Ovary (tissue), 10 donors: ENCODE measurements at regions of chr19 and their contacts with region 1.

Region 1: GRCh38 chr19:16628183-16628983 is at the start of gene MED26:
- DNase-seq: peak; percentile 98 to 99 (median 99)
- H3K4me3 ChIP-seq: peak within 1 kb of the TSS; percentile 98
- H3K27ac ChIP-seq: peak within 1 kb of the TSS; percentile 84 to 94
- H3K4me1 ChIP-seq: peaks cover 8% of the 10 kb centered on the region
- H3K27me3 ChIP-seq: no peaks in the 10 kb centered on the region
- CTCF ChIP-seq: peak in 1 of 3 donors; percentile 24
- EP300 ChIP-seq: peak; percentile 51
- POLR2A ChIP-seq: peak; percentile 63
- total RNA-seq, gene MED26: 10.3 to 13.2 (median 11.6) TPM

Region 2: GRCh38 chr19:16572332-16573211 is 55.8 kb before region 1 on chr19 and contains the start of gene SLC35E1:
- intact Hi-C with region 1: loop called in 2 of 4 experiments (anchors 5 kb)
- DNase-seq: peak; percentile 93 to 96 (median 94)
- H3K4me3 ChIP-seq: peak within 1 kb of the TSS; percentile 79
- H3K27ac ChIP-seq: peak within 1 kb of the TSS; percentile 39 to 52
- H3K4me1 ChIP-seq: peaks cover 15% of the 10 kb centered on the region
- H3K27me3 ChIP-seq: no peaks in the 10 kb centered on the region
- CTCF ChIP-seq: no peak
- EP300 ChIP-seq: no peak
- POLR2A ChIP-seq: peak; percentile 85
- total RNA-seq, gene SLC35E1: 20.6 to 37.9 (median 30.2) TPM

Region 3: DNA sequence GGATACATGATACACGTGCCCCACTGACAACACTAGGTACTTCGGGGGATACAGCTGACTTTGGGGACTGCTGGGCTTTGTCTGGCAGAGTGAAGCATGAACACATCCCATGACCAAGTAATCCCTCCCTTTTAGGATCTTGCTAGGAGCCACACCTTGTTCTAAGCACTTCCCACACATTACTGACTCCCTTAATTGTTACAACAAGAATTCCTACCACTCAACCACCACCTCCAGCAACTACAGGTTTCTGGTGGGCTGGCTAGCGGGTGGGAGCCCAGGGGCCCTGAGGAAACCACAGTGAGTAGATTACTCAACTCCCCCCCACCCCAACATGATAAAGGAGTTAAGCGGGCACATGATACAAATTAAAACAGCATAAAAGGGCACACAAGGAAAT is 49.0 kb before region 1 on chr19:
- intact Hi-C with region 1: loop called in 2 of 4 experiments (anchors 5 kb)
- DNase-seq: no peak
- H3K4me3 ChIP-seq: no peak overlapping the region
- H3K27ac ChIP-seq: no peak overlapping the region
- H3K4me1 ChIP-seq: peaks cover 3% of the 10 kb centered on the region
- H3K27me3 ChIP-seq: no peaks in the 10 kb centered on the region
- CTCF ChIP-seq: no peak
- EP300 ChIP-seq: no peak
- POLR2A ChIP-seq: no peak

Region 4: GRCh38 chr19:17035842-17036424 is 407.6 kb after region 1 on chr19:
- intact Hi-C with region 1: no loop called
- DNase-seq: no peak
- H3K4me3 ChIP-seq: no peak overlapping the region
- H3K27ac ChIP-seq: no peak overlapping the region
- H3K4me1 ChIP-seq: no peaks in the 10 kb centered on the region
- H3K27me3 ChIP-seq: no peaks in the 10 kb centered on the region
- CTCF ChIP-seq: no peak
- EP300 ChIP-seq: no peak
- POLR2A ChIP-seq: no peak